Caco-2 (cell line): ENCODE measurements at regions of chr1 and their contacts with region 1.

Region 1: DNA sequence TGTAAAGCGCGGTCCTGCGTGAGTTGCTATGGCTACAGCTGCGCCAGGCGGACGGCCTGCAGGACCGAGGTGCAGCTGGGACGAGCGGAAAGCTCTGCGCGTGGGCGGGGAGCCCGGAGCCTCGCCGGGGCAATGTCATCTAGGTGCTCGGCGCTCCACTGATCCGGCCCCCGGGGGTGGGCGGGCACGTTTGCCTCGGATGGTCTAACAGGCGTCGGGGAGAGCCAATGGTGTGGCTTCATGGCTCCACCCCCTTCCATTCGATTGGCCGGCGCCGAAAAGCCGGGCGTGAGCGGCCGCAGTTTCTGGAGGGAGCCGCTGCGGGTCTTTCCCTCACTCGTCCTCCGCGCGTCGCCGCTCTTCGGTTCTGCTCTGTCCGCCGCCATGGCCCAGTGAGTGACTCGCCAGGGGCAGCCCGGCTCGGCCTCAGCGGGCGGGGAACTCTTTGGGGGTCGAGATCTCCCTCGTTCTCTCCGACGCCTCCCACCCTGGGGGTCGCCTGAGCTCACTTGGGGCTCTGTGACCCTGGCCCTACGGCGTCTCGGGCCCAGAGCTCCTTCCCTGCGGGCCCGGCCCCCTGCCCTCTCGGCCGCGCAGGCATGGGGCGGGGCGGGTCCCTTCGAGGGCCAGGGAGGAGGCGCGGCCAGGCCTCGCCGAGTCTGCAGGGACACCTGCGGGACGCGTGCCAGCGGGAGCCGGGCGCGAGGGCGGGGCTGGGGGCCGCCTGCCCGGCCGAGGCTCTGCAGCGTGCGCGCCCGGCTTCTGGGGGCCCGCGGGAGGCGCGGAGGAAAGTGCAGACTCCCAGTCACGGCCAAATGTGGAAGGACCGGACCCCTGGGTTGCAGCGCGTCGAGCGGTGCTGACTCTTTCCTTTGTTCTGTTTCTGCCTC is at the start of gene PGD:
- DNase-seq: peak; percentile 98 to 99
- H3K4me3 ChIP-seq: peak within 1 kb of the TSS; percentile 77
- H3K4me3 Mint-ChIP-seq: peak within 1 kb of the TSS; percentile 93
- H3K27ac Mint-ChIP-seq: peak within 1 kb of the TSS; percentile 84
- H3K4me1 ChIP-seq: peaks cover 14% of the 10 kb centered on the region; the same call in 1 of the 2 replicates
- H3K4me1 Mint-ChIP-seq: peaks cover 5% of the 10 kb centered on the region
- H3K27me3 ChIP-seq: no peaks in the 10 kb centered on the region
- H3K27me3 Mint-ChIP-seq: no peaks in the 10 kb centered on the region
- CTCF ChIP-seq: no peak
- total RNA-seq, gene PGD: 187 and 215 TPM in 2 replicates

Region 2: GRCh38 chr1:10378081-10378841 is 20.7 kb before region 1 on chr1:
- CTCF ChIA-PET with region 1: interaction called, 16 read pairs
- POLR2A ChIA-PET with region 1: no interaction called
- intact Hi-C with region 1: loop called (anchors 1 kb)
- DNase-seq: peak in 1 of 2 experiments; percentile 30
- H3K4me3 ChIP-seq: no peak overlapping the region
- H3K4me3 Mint-ChIP-seq: no peak overlapping the region
- H3K27ac Mint-ChIP-seq: no peak overlapping the region
- H3K4me1 ChIP-seq: no peaks in the 10 kb centered on the region
- H3K4me1 Mint-ChIP-seq: no peaks in the 10 kb centered on the region
- H3K27me3 ChIP-seq: no peaks in the 10 kb centered on the region
- H3K27me3 Mint-ChIP-seq: no peaks in the 10 kb centered on the region
- CTCF ChIP-seq: no peak

Region 3: DNA sequence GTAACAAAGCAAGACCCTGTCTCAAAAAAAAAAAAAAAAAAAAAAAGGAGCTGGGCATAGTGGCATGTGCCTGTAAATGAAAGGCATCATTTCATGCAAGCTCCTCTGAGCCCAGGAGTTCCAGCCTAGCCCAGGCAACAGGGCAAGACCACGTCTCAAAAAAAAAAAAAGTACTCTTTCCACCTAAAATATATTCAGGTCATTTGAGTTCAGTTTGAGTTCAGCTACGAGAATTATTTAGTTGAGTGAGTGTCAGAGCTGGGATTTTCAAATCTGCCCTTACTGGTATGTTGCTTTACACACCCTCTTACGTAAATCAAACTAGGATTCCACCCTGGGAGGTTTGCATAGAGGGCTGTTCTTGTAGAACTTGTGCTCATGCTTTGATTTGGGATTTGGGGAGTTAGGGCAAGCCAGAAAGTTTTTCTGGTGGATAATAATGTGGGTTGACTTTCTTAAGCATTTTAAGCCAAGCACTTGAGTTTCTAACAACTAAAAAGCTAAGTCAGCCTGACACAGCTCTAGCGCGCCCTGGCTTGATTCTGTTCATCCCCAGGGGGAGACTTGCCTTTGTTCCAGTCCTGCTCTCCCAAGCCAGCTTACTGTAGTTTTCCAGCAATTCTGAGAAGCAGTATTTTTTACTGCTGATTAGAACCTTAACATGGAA is 11.4 kb before region 1 on chr1:
- CTCF ChIA-PET with region 1: interaction called, 4 read pairs
- POLR2A ChIA-PET with region 1: interaction called, 12 read pairs
- intact Hi-C with region 1: loop called (anchors 1 kb)
- DNase-seq: peak in 1 of 2 experiments; percentile 27
- H3K4me3 ChIP-seq: no peak overlapping the region
- H3K4me3 Mint-ChIP-seq: no peak overlapping the region
- H3K27ac Mint-ChIP-seq: peak overlapping the region; percentile 84
- H3K4me1 ChIP-seq: peaks cover 19% of the 10 kb centered on the region
- H3K4me1 Mint-ChIP-seq: no peaks in the 10 kb centered on the region
- H3K27me3 ChIP-seq: no peaks in the 10 kb centered on the region
- H3K27me3 Mint-ChIP-seq: no peaks in the 10 kb centered on the region
- CTCF ChIP-seq: no peak

Region 4: GRCh38 chr1:10438677-10439163 is 39.7 kb after region 1 on chr1:
- CTCF ChIA-PET with region 1: no interaction called
- POLR2A ChIA-PET with region 1: interaction called, 17 read pairs
- intact Hi-C with region 1: no loop called
- DNase-seq: no peak
- H3K4me3 ChIP-seq: no peak overlapping the region
- H3K4me3 Mint-ChIP-seq: no peak overlapping the region
- H3K27ac Mint-ChIP-seq: no peak overlapping the region
- H3K4me1 ChIP-seq: no peaks in the 10 kb centered on the region
- H3K4me1 Mint-ChIP-seq: no peaks in the 10 kb centered on the region
- H3K27me3 ChIP-seq: no peaks in the 10 kb centered on the region
- H3K27me3 Mint-ChIP-seq: no peaks in the 10 kb centered on the region
- CTCF ChIP-seq: no peak

Region 5: DNA sequence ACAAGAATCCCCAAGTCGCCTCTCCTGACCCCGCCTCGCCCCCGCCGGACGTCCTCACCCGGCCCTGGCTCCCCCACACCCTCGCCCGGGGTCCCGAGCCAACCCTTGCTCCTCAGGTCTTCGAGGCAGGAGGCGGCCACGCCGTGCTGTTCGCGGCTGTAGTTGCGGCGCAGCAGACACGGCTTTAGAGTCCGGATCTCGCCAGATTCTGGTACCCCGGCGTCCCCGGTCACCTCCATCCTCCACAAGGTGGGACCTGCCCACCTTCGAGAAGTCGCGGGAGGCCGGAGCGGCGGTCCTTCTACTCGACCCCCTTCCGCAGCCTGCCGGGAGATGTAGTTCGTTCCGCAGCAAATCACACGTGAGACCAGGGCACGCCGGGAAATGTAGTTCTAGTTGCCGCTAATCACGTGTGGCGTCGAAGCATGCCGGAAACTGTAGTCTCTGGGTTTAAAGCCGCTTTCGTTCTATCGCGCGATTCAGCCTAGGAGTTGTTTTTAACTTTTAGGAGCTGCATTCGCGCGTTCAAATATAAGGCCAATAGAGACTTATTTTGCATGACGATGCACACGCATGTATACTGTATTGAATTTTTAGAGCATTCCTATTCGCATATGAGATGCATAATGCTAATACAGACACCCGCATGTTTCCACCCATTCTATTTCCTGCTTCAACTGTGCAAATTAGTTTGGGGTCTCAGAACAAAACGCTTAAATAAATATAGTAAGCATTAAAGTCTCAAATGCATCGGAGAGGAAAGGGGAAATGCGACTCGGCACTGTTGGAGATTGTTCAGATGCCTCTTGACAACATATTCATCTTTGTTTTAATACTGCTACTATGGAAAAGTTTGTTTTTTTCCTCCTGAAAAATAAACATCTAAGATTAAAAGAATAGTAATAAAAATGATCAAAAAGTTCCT is 73.5 kb after region 1 on chr1 and contains the start of gene DFFA:
- CTCF ChIA-PET with region 1: no interaction called
- POLR2A ChIA-PET with region 1: no interaction called
- intact Hi-C with region 1: loop called (anchors 2 kb)
- DNase-seq: peak; percentile 93 to 96
- H3K4me3 ChIP-seq: peak within 1 kb of the TSS; percentile 58
- H3K4me3 Mint-ChIP-seq: peak within 1 kb of the TSS; percentile 94
- H3K27ac Mint-ChIP-seq: peak within 1 kb of the TSS; percentile 95
- H3K4me1 ChIP-seq: 0 out of 2 replicates have a peak, but pooled peaks cover 4% of the 10 kb centered on the region
- H3K4me1 Mint-ChIP-seq: peaks cover 14% of the 10 kb centered on the region
- H3K27me3 ChIP-seq: no peaks in the 10 kb centered on the region
- H3K27me3 Mint-ChIP-seq: no peaks in the 10 kb centered on the region
- CTCF ChIP-seq: no peak
- total RNA-seq, gene DFFA: 80.2 and 80.4 TPM in 2 replicates